Thyroid gland (tissue), 4 donors: ENCODE measurements at regions of chr4 and their contacts with region 1.

Region 1: DNA sequence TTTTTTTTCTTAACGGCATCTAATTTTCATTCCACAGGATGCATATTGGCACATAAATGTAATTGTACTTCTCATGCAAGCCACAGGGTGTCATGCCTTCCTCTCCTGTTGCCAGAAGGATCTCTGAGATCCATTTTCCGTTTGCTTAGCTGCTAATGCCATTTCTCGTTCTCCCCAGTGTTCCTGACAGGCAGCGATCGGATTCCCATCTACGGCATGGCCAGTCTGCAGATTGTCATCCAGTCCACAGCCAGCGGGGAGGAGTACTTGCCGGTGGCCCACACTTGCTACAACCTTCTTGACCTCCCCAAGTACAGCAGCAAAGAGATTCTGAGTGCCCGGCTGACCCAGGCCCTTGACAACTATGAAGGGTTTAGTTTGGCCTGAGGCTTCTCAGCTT is 8.9 kb upstream of the NAP1L5 start:
- DNase-seq: peak; percentile 49 to 52
- H3K4me3 ChIP-seq: no peak overlapping the region
- H3K27ac ChIP-seq: peak overlapping the region; percentile 1 to 74 (median 37)
- H3K4me1 ChIP-seq: peaks cover 8 to 10% of the 10 kb centered on the region in 2 donors
- H3K27me3 ChIP-seq: no peaks in the 10 kb centered on the region
- CTCF ChIP-seq: peak; percentile 41 to 94 (median 68)
- POLR2A ChIP-seq: no peak

Region 2: DNA sequence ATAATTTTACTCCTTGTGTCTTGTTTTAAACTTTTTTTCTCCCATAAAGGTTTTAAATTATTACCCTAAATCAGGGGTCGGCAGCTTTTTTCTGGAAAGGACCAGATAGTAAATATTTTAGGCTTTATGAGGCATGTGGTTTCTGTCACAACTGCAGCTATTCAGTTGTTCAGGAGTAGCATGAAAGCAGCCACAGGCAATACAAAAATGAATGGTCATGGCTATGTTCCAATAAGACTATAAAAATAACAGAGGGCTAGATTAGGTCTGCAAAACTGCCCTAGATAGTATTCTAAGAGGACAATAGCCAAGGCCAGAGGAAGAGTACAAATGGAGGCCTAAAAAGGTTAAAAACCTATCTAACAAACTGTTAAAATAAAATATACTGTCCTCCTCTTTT is 225.0 kb before region 1 on chr4:
- intact Hi-C with region 1: no loop called
- DNase-seq: no peak
- H3K4me3 ChIP-seq: no peak overlapping the region
- H3K27ac ChIP-seq: no peak overlapping the region
- H3K4me1 ChIP-seq: peaks cover 0 to 3% of the 10 kb centered on the region in 2 donors
- H3K27me3 ChIP-seq: no peaks in the 10 kb centered on the region
- CTCF ChIP-seq: no peak
- POLR2A ChIP-seq: no peak

Region 3: GRCh38 chr4:88823058-88823919 is 116.7 kb after region 1 on chr4:
- intact Hi-C with region 1: loop called (anchors 10 kb)
- DNase-seq: peak; percentile 94 to 97
- H3K4me3 ChIP-seq: peak overlapping the region in 2 of 3 donors; percentile 23 to 38
- H3K27ac ChIP-seq: peak overlapping the region; percentile 93 to 96 (median 95)
- H3K4me1 ChIP-seq: peaks cover 16 to 22% of the 10 kb centered on the region in 2 donors
- H3K27me3 ChIP-seq: no peaks in the 10 kb centered on the region
- CTCF ChIP-seq: no peak
- POLR2A ChIP-seq: peak; percentile 65 to 95